K562 (cell line): ENCODE measurements at regions of chr11 and their contacts with region 1.

Region 1: GRCh38 chr11:62855571-62856332 is 16.4 kb upstream of the WDR74 start:
- DNase-seq: peak; percentile 92 to 99 (median 96)
- ATAC-seq: peak; percentile 77
- H3K4me3 ChIP-seq: peak overlapping the region; percentile 74
- H3K27ac ChIP-seq: peak overlapping the region; percentile 99
- H3K4me1 ChIP-seq: peaks cover 5 to 21% of the 10 kb centered on the region in 2 experiments; a peak in 3 of 5 replicates
- H3K27me3 ChIP-seq: no peaks in the 10 kb centered on the region
- CTCF ChIP-seq: no peak
- EP300 ChIP-seq: peak; percentile 38; the same call in 1 of the 2 replicates
- POLR2A ChIP-seq: peak; percentile 100
- RAD21 ChIP-seq: no peak; a peak in 1 of 4 replicates

Region 2: DNA sequence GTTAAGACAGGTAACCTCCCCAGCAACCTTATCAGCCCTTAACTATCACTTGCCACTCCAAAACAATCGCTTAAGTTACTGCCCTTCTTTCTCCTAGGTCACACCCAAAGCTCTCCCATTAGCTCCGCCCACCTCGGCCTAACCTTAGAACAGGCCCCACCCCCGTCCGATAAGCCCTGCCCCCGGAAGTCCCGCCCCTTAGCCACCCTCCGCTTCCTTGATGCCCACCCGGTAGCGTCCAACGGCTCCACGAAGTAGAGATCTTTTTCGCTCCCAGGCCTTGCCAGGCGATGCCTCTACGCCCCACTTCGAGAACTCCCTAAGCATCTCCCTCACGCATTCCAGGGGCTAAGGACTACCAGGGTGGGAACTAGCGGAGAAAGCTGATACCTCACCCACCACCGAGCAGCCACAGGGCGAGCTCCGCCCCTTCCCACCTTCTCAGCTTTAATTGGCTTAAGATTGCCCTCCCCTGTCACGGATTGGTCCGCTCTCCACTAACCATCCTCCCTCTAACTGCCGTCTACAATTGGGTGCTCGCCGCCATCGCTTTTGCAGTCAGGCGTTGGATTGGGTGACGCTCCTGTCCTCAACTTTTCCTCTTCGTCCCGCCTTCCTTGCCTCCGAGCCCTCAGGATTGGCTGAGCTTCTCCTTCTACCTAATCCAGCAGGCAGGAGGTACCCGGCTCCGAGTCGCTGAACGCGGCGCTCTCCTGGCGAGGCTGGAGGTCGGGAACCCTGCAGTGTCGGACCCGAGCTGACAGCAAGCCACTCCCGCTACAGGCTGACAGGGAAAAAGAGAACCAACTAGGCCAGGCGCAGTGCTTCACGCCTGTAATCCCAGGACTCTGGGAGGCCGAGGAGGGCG is 101.8 kb before region 1 on chr11 and contains the start of gene ZBTB3:
- CTCF ChIA-PET with region 1: no interaction called
- POLR2A ChIA-PET with region 1: interaction called, 27 read pairs
- in situ Hi-C with region 1: no loop called
- intact Hi-C with region 1: no loop called
- DNase-seq: peak; percentile 95 to 99 (median 96)
- ATAC-seq: peak; percentile 98
- H3K4me3 ChIP-seq: peak within 1 kb of the TSS; percentile 63
- H3K27ac ChIP-seq: peak within 1 kb of the TSS; percentile 86
- H3K4me1 ChIP-seq: peaks cover 14 to 28% of the 10 kb centered on the region in 2 experiments; a peak in 4 of 5 replicates
- H3K27me3 ChIP-seq: no peaks in the 10 kb centered on the region
- CTCF ChIP-seq: peak in 1 of 3 experiments; percentile 1; a peak in 1 of 6 replicates
- EP300 ChIP-seq: no peak
- POLR2A ChIP-seq: peak; percentile 98
- RAD21 ChIP-seq: no peak
- polyA plus RNA-seq, gene ZBTB3: 1.9 to 3.0 TPM

Region 3: GRCh38 chr11:62787005-62787759 is 68.6 kb before region 1 on chr11 and contains the start of gene TMEM179B:
- CTCF ChIA-PET with region 1: interaction called, 51 read pairs
- POLR2A ChIA-PET with region 1: interaction called, 42 read pairs
- in situ Hi-C with region 1: no loop called
- intact Hi-C with region 1: no loop called
- DNase-seq: peak; percentile 83 to 99 (median 90)
- ATAC-seq: peak; percentile 80
- H3K4me3 ChIP-seq: peak within 1 kb of the TSS; percentile 82
- H3K27ac ChIP-seq: peak within 1 kb of the TSS; percentile 92
- H3K4me1 ChIP-seq: peaks cover 27 to 29% of the 10 kb centered on the region in 2 experiments
- H3K27me3 ChIP-seq: no peaks in the 10 kb centered on the region
- CTCF ChIP-seq: peak; percentile 67 to 90 (median 81)
- EP300 ChIP-seq: no peak
- POLR2A ChIP-seq: peak; percentile 96
- RAD21 ChIP-seq: peak; percentile 28 to 52; a peak in 3 of 4 replicates
- polyA plus RNA-seq, gene TMEM179B: 88.6 to 105 TPM

Region 4: DNA sequence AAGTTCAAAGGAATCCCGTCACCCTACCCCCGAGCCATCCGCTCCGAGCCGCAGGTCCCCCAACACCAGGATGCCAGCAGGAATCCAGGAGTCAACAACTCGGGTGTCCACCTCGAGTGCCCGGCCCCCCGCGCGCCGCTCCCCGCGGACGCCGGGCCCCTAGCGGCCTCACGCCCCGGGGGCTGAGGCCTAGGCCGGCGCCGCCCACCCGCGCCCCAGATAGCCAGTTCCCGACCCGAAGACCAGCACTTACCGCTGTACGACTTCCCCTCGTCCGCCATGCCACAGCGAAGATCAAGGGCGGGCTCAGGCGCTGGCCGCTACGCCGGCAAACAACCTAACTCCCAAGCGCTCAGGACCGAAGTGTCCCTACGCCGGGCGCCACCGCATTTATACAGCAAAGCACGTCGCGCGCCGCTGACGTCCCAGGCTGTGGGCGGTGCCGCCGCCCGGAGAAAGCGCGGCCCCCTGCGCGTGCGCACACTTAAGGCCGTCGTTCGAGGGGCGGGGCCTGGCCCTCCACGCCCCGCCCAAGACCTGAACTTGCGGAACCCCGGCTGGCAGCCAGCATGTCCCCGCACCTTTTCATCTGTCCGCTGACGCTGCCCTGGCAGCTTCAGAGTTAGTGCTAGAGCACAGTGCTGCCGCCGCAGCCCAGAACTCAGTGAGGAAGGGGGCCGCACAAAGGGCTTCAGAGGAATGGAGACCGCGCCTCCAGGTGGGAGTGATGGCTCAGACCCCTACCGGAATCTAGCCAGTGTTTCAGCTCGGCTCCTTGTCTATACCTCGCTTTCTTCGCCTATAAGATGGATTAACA is 50.5 kb before region 1 on chr11 and contains the start of gene NXF1:
- CTCF ChIA-PET with region 1: no interaction called
- POLR2A ChIA-PET with region 1: interaction called, 31 read pairs
- in situ Hi-C with region 1: no loop called
- intact Hi-C with region 1: loop called (anchors 5 kb)
- DNase-seq: peak; percentile 97 to 98 (median 98)
- ATAC-seq: peak; percentile 91
- H3K4me3 ChIP-seq: peak within 1 kb of the TSS; percentile 94
- H3K27ac ChIP-seq: peak within 1 kb of the TSS; percentile 74
- H3K4me1 ChIP-seq: peaks cover 11 to 19% of the 10 kb centered on the region in 2 experiments; a peak in 4 of 5 replicates
- H3K27me3 ChIP-seq: no peaks in the 10 kb centered on the region
- CTCF ChIP-seq: peak in 2 of 3 experiments; percentile 7 to 12; a peak in 2 of 6 replicates
- EP300 ChIP-seq: no peak; the same call in 1 of the 2 replicates
- POLR2A ChIP-seq: peak; percentile 100
- RAD21 ChIP-seq: 0 out of 4 replicates have a peak, but pooled peaks of 1 of the 2 experiments have one; percentile 4
- polyA plus RNA-seq, gene NXF1: 26.8 to 68.8 TPM

Region 5: DNA sequence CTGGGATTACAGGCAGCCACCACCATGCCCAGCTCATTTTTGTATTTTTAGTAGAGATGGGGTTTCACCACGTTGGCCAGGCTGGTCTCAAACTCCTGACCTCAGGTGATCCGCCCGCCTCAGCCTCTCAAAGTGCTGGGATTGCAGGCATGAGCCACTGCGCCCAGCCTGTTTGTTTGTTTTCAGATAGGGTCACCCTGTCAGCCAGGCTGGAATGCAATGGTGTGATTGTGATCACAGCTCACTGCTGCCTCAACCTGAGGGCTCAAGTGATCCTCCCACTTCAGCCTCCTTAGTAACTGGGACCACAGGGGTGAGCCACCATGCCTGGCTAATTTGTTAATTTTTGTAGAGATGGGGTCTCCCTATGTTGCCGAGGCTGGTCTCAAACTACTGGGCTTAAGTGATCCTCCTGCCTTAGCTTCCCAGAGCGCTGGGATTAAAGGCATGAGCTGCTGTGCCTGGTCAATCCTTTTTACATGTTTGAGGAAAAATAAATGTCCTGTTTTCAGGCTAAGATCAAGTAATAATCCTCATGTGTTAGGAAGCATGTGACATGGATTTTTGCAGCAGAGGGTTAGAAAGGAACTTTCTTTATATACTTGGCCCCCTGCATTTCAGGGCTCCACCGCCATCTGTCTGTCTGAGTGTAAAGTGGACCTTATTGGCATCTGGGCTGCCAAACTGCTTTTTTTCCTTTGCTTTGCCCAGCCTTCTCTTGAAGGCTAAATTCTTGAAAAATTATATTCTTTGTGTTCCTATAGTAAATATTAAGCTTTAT is 20.1 kb after region 1 on chr11:
- CTCF ChIA-PET with region 1: no interaction called
- POLR2A ChIA-PET with region 1: interaction called, 180 read pairs
- in situ Hi-C with region 1: no loop called
- intact Hi-C with region 1: no loop called
- DNase-seq: no peak
- ATAC-seq: no peak
- H3K4me3 ChIP-seq: no peak overlapping the region
- H3K27ac ChIP-seq: peak overlapping the region; percentile 50; the same call in 1 of the 3 replicates
- H3K4me1 ChIP-seq: peaks cover 32 to 36% of the 10 kb centered on the region in 2 experiments
- H3K27me3 ChIP-seq: no peaks in the 10 kb centered on the region
- CTCF ChIP-seq: peak in 1 of 3 experiments; percentile 17; a peak in 1 of 6 replicates
- EP300 ChIP-seq: no peak
- POLR2A ChIP-seq: no peak
- RAD21 ChIP-seq: no peak

Region 6: DNA sequence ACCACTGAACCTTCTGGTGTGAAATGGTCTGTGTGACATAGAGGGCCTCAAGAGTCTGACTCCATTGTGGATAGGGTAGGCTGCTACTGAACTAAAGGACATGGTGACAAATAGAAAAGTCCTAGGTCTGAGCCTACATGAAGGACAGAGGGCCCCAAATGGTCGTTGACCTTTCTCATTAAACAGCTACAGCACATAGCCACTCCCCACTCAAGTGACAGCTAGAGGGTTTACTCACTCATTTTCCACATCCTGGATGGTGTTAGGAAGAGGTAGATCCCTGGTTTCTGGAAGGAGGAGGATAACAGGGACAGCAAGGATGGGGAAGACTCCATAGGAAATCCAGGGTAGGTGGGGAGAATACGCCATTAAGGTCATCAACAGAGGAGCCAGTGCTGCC is 224.9 kb after region 1 on chr11:
- CTCF ChIA-PET with region 1: no interaction called
- POLR2A ChIA-PET with region 1: no interaction called
- in situ Hi-C with region 1: no loop called
- intact Hi-C with region 1: no loop called
- DNase-seq: no peak
- ATAC-seq: no peak
- H3K4me3 ChIP-seq: no peak overlapping the region
- H3K27ac ChIP-seq: no peak overlapping the region
- H3K4me1 ChIP-seq: no peaks in the 10 kb centered on the region
- H3K27me3 ChIP-seq: no peaks in the 10 kb centered on the region
- CTCF ChIP-seq: no peak
- EP300 ChIP-seq: no peak
- POLR2A ChIP-seq: no peak
- RAD21 ChIP-seq: no peak